Activated T-helper 1 cell treated with anti-CD3 and anti-CD28 coated beads, Interleukin-12 subunit alpha, Interleukin-12 subunit beta, Interleukin-2, Interleukin-4 antibody, amounts not matched to agents 30 ng/mL and 10 ng/mL and 1 ng/mL, durations not matched to agents 14 hours and 24 hours and 36 hours (primary cell): ENCODE measurements at regions of chr4 and their contacts with region 1.

Region 1: DNA sequence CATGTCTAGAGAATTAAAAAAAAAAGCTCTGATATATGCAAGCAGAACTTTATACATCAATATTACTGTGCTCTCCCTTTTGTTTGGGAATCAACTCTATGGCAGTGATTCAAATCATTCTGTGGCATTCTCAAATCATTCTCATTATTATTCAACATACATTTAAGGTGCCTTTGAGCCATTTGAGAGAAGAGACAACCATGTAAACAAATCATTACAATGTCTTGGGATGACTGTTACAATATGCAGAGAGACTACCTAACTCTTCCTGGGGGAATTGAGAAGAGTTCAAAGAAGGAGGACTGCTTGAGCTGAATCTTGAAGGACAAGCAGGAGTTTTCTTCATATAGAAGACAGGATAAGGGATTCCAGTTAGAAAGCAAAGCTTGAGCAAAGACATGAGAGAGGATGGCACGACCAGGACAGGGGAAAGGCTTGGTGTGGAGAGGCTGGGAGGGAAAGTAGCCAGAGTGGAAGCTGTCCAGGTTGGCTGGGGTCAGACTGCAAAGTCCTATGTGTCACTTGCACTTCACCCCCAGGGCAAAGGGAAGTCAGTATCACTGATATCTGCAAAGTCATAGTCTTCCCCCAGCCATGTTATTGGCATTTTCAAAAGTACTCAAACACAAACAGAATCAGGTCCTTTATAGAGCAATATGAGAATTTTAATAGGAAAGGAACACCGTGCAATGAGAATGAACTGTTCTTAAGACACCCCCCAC is 9.0 kb downstream of the SEC24D start:
- DNase-seq: no peak
- H3K4me3 Mint-ChIP-seq: no peak overlapping the region
- H3K27ac Mint-ChIP-seq: no peak overlapping the region
- H3K4me1 Mint-ChIP-seq: peaks cover 59% of the 10 kb centered on the region
- H3K27me3 Mint-ChIP-seq: no peaks in the 10 kb centered on the region

Region 2: DNA sequence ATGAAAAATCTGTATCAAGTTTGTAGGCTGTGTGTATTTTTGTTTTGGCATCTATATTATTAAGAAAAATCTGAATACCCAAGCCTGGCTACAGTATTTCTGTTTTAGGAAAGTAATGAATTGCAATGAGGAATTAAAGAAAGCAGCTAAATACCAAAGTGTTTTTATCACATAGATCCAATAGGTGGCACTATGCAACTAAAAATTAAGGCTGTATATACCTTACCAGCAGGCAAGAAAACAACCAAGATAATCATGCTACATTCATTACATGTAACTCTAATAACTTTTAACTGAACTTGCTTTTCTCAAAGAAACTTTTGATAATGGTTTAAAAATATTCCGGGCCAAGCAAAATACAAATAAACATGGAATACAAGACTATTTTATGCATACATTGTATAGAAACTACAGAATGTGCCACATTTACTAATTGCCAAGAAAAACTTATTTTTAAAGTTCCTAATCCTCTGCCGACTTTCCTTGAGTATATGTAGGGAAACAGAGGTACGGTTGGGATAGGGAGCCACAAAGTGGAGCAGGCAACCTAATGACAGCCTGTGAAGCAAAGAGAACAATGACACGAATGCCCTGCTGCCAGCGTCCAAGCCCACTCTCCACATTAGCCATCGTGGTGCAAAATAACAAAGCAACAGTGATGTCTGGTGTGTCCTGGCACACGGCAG is 54.7 kb before region 1 on chr4:
- intact Hi-C with region 1: no loop called
- DNase-seq: no peak
- H3K4me3 Mint-ChIP-seq: no peak overlapping the region
- H3K27ac Mint-ChIP-seq: no peak overlapping the region
- H3K4me1 Mint-ChIP-seq: no peaks in the 10 kb centered on the region
- H3K27me3 Mint-ChIP-seq: no peaks in the 10 kb centered on the region

Region 3: GRCh38 chr4:118787844-118788380 is 39.0 kb before region 1 on chr4:
- intact Hi-C with region 1: loop called (anchors 5 kb)
- DNase-seq: no peak
- H3K4me3 Mint-ChIP-seq: no peak overlapping the region
- H3K27ac Mint-ChIP-seq: no peak overlapping the region
- H3K4me1 Mint-ChIP-seq: no peaks in the 10 kb centered on the region
- H3K27me3 Mint-ChIP-seq: no peaks in the 10 kb centered on the region